B cell (primary cell): ENCODE measurements at regions of chr1 and their contacts with region 1.

Region 1: GRCh38 chr1:34460193-34460592 is 283.5 kb downstream of the C1orf94 start:
- DNase-seq: peak; percentile 27
- ATAC-seq: no peak
- H3K4me3 ChIP-seq: no peak overlapping the region
- H3K4me3 Mint-ChIP-seq: no peak overlapping the region
- H3K27ac ChIP-seq: no peak overlapping the region
- H3K27ac Mint-ChIP-seq: no peak overlapping the region
- H3K4me1 ChIP-seq: no peaks in the 10 kb centered on the region
- H3K4me1 Mint-ChIP-seq: no peaks in the 10 kb centered on the region
- H3K27me3 ChIP-seq: no peaks in the 10 kb centered on the region
- H3K27me3 Mint-ChIP-seq: peaks cover 16% of the 10 kb centered on the region
- CTCF ChIP-seq: peak; percentile 68

Region 2: GRCh38 chr1:34597877-34598514 is 137.8 kb after region 1 on chr1:
- CTCF ChIA-PET with region 1: interaction called, 3 read pairs
- POLR2A ChIA-PET with region 1: no interaction called
- intact Hi-C with region 1: loop called (anchors 2 kb)
- DNase-seq: peak; percentile 35
- ATAC-seq: peak; percentile 14
- H3K4me3 ChIP-seq: no peak overlapping the region
- H3K4me3 Mint-ChIP-seq: no peak overlapping the region
- H3K27ac ChIP-seq: no peak overlapping the region
- H3K27ac Mint-ChIP-seq: no peak overlapping the region
- H3K4me1 ChIP-seq: no peaks in the 10 kb centered on the region
- H3K4me1 Mint-ChIP-seq: no peaks in the 10 kb centered on the region
- H3K27me3 ChIP-seq: no peaks in the 10 kb centered on the region
- H3K27me3 Mint-ChIP-seq: peaks cover 14% of the 10 kb centered on the region
- CTCF ChIP-seq: peak; percentile 62

Region 3: DNA sequence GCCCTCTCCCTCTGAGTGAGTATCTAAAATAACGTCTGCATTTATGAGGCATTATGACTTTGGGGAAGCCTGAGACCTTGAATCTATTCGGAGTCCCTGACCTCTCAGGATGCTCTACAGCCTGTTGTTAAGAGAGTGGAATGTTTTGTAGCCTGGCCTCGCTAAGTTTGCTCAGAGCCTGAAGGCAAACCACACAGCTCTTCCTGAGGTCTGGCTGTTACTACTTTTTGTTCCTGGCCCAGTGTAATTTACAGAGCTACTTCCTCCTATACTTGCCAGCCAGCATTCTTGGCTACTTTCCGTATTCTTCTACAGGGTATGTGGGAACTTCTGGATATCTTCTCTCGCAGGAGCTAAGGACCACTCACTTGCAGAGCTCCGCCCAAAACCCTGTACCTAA is 804.7 kb after region 1 on chr1:
- CTCF ChIA-PET with region 1: no interaction called
- POLR2A ChIA-PET with region 1: no interaction called
- intact Hi-C with region 1: no loop called
- DNase-seq: no peak
- ATAC-seq: no peak
- H3K4me3 ChIP-seq: no peak overlapping the region
- H3K4me3 Mint-ChIP-seq: no peak overlapping the region
- H3K27ac ChIP-seq: no peak overlapping the region
- H3K27ac Mint-ChIP-seq: no peak overlapping the region
- H3K4me1 ChIP-seq: peaks cover 12 to 13% of the 10 kb centered on the region in 2 donors
- H3K4me1 Mint-ChIP-seq: peaks cover 10% of the 10 kb centered on the region
- H3K27me3 ChIP-seq: peaks cover 0 to 3% (median 2%) of the 10 kb centered on the region in 4 experiments
- H3K27me3 Mint-ChIP-seq: peaks cover 24% of the 10 kb centered on the region
- CTCF ChIP-seq: no peak